ENCODE measurements at regions of chr6 and their contacts with region 1.

Region 1: GRCh38 chr6:131532580-131533039 is 40.4 kb upstream of the ARG1 start:
- DNase-seq: no peak
- H3K4me3 ChIP-seq: no peak overlapping the region
- H3K27me3 ChIP-seq: no peaks in the 10 kb centered on the region
- CTCF ChIP-seq: no peak

Region 2: DNA sequence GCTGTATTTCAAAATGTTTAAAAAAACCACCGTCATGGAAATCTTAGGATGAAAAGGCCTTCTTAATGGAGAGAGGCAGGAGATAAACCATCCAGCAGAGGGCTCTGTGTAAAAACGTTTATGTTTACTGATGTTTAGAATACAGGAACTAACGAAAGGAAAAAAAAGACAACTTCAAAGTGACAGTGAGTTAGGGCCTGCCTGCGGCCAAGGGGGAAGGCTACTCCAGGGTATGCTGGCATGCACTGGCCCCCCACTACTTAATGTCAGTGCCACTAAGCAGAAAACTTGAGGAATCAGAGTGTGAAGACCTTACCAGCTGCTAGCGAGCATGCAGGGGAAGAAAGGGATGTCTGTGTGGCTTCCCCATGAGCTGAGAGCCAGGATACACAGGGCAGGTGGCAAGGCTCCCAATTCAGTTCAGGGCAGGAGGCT is 349.6 kb before region 1 on chr6:
- CTCF ChIA-PET with region 1: interaction called, 18 read pairs
- POLR2A ChIA-PET with region 1: no interaction called
- DNase-seq: no peak
- H3K4me3 ChIP-seq: no peak overlapping the region
- H3K27me3 ChIP-seq: no peaks in the 10 kb centered on the region
- CTCF ChIP-seq: peak; percentile 64

Region 3: GRCh38 chr6:131199568-131200272 is 332.9 kb before region 1 on chr6:
- CTCF ChIA-PET with region 1: interaction called, 35 read pairs
- POLR2A ChIA-PET with region 1: no interaction called
- DNase-seq: no peak
- H3K4me3 ChIP-seq: no peak overlapping the region
- H3K27me3 ChIP-seq: no peaks in the 10 kb centered on the region
- CTCF ChIP-seq: peak; percentile 79

Region 4: GRCh38 chr6:131281471-131282270 is 250.9 kb before region 1 on chr6:
- CTCF ChIA-PET with region 1: no interaction called
- POLR2A ChIA-PET with region 1: no interaction called
- DNase-seq: no peak
- H3K4me3 ChIP-seq: no peak overlapping the region
- H3K27me3 ChIP-seq: no peaks in the 10 kb centered on the region
- CTCF ChIP-seq: no peak

Region 5: GRCh38 chr6:131357501-131357900 is 175.1 kb before region 1 on chr6:
- CTCF ChIA-PET with region 1: no interaction called
- POLR2A ChIA-PET with region 1: no interaction called
- DNase-seq: no peak
- H3K4me3 ChIP-seq: no peak overlapping the region
- H3K27me3 ChIP-seq: no peaks in the 10 kb centered on the region; the same call in 1 of the 2 replicates
- CTCF ChIP-seq: no peak

Region 6: GRCh38 chr6:131548441-131548840 is 15.8 kb after region 1 on chr6:
- CTCF ChIA-PET with region 1: interaction called, 12 read pairs
- POLR2A ChIA-PET with region 1: no interaction called
- DNase-seq: no peak
- H3K4me3 ChIP-seq: no peak overlapping the region
- H3K27me3 ChIP-seq: peaks cover 7% of the 10 kb centered on the region; the same call in 1 of the 2 replicates
- CTCF ChIP-seq: no peak